Caco-2 (cell line): ENCODE measurements at regions of chr4 and their contacts with region 1.

Region 1: DNA sequence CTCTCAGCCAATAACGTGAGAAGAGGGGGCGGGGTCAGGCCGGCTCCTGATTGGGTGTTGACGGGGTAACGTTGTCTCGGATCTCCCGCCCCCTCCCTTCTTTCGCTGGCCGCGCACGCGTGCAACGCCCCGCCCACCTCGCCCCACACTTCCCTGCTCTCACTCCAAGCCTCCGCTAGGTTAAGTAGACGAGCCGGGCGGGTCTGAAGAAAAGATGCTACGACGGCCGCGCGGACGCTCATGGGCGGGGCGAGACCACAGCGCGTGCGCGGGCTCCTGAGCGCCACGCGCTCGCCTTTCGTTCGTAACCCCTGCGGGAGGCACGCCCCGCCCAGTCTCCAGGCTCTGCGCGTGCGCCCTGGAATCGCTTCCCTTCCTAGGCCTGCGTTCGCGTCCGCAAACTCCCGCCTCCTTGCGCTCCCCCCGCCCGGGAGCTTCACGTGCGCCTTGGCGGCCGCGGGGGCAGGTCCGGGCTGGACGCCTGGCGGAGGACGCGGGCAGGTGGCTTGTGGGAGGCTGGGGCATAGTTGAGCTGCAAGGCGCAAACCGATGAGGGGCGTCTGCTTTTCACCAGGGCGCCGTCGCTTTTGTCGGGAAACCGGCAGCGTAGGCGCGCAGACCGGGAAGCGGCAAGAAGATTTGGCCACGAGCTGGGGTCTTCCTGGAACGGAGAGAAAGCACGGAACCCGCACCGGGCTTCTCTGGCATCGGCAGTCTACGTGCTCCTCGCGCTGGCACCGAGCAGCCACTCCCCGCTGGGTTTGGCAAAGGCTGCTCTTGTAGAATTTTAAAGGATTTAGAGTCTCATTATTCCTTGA is 467 bp upstream of the PGRMC2 start:
- DNase-seq: peak; percentile 99
- H3K4me3 ChIP-seq: peak overlapping the region; percentile 92
- H3K4me3 Mint-ChIP-seq: peak overlapping the region; percentile 91
- H3K27ac Mint-ChIP-seq: peak overlapping the region; percentile 82
- H3K4me1 ChIP-seq: peaks cover 30% of the 10 kb centered on the region
- H3K4me1 Mint-ChIP-seq: peaks cover 29% of the 10 kb centered on the region
- H3K27me3 ChIP-seq: no peaks in the 10 kb centered on the region
- H3K27me3 Mint-ChIP-seq: no peaks in the 10 kb centered on the region
- CTCF ChIP-seq: peak in 1 of 2 experiments; percentile 34

Region 2: GRCh38 chr4:128060699-128061565 is 227.1 kb before region 1 on chr4 and contains the start of gene LARP1B:
- CTCF ChIA-PET with region 1: no interaction called
- POLR2A ChIA-PET with region 1: interaction called, 5 read pairs
- intact Hi-C with region 1: loop called (anchors 2 kb)
- DNase-seq: peak; percentile 97
- H3K4me3 ChIP-seq: peak within 1 kb of the TSS; percentile 86
- H3K4me3 Mint-ChIP-seq: peak within 1 kb of the TSS; percentile 71
- H3K27ac Mint-ChIP-seq: peak within 1 kb of the TSS; percentile 93
- H3K4me1 ChIP-seq: no peaks in the 10 kb centered on the region; the same call in 1 of the 2 replicates
- H3K4me1 Mint-ChIP-seq: peaks cover 5% of the 10 kb centered on the region
- H3K27me3 ChIP-seq: no peaks in the 10 kb centered on the region
- H3K27me3 Mint-ChIP-seq: no peaks in the 10 kb centered on the region
- CTCF ChIP-seq: no peak
- total RNA-seq, gene LARP1B: 23.6 and 25.0 TPM in 2 replicates

Region 3: DNA sequence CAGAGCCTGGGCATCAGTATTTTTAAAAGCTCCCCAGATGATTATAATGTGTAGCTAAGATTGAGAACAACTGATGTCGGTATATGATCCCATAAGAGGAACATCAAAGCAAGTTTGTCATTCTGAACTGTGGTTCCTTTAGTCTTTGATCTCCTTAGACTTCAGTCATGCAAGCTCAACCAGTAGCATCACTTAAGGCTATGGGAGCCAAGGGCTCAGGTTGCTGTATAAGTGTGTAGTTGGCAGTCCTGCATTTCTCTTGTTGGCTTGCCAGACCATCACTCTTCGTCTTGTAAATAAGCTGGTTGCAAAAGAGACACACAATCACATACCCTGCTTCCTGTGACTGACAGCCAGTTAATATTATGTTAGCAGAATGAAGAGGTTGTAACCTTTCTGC is 83.2 kb before region 1 on chr4:
- CTCF ChIA-PET with region 1: no interaction called
- POLR2A ChIA-PET with region 1: no interaction called
- intact Hi-C with region 1: no loop called
- DNase-seq: no peak
- H3K4me3 ChIP-seq: no peak overlapping the region
- H3K4me3 Mint-ChIP-seq: no peak overlapping the region
- H3K27ac Mint-ChIP-seq: no peak overlapping the region
- H3K4me1 ChIP-seq: no peaks in the 10 kb centered on the region
- H3K4me1 Mint-ChIP-seq: no peaks in the 10 kb centered on the region
- H3K27me3 ChIP-seq: no peaks in the 10 kb centered on the region
- H3K27me3 Mint-ChIP-seq: no peaks in the 10 kb centered on the region
- CTCF ChIP-seq: no peak

Region 4: GRCh38 chr4:128307123-128307571 is 19.1 kb after region 1 on chr4:
- CTCF ChIA-PET with region 1: interaction called, 3 read pairs
- POLR2A ChIA-PET with region 1: no interaction called
- intact Hi-C with region 1: loop called (anchors 1 kb)
- DNase-seq: peak in 1 of 2 experiments; percentile 13
- H3K4me3 ChIP-seq: no peak overlapping the region
- H3K4me3 Mint-ChIP-seq: no peak overlapping the region
- H3K27ac Mint-ChIP-seq: peak overlapping the region; percentile 27
- H3K4me1 ChIP-seq: peaks cover 18% of the 10 kb centered on the region; the same call in 1 of the 2 replicates
- H3K4me1 Mint-ChIP-seq: peaks cover 10% of the 10 kb centered on the region
- H3K27me3 ChIP-seq: no peaks in the 10 kb centered on the region
- H3K27me3 Mint-ChIP-seq: no peaks in the 10 kb centered on the region
- CTCF ChIP-seq: no peak

Region 5: DNA sequence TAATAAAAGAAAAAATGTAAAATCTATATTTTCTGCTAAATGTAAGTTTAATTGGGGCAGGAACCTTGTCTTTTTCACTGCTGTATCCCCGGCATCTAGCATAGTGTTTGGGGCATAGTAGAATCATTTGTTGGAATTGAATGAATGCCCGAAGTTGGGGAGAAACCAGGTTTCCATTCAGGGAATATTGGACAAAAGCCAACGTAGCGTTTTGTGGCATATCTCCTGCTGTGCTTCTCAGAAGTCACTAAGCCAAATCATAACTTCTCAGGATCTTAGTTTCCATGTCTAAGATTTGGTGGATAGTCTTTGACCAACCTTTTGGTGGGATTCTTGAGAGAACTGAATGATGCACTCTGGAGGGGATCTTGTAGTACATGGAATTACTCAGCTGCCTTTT is 41.6 kb after region 1 on chr4:
- CTCF ChIA-PET with region 1: no interaction called
- POLR2A ChIA-PET with region 1: no interaction called
- intact Hi-C with region 1: no loop called
- DNase-seq: no peak
- H3K4me3 ChIP-seq: no peak overlapping the region
- H3K4me3 Mint-ChIP-seq: no peak overlapping the region
- H3K27ac Mint-ChIP-seq: no peak overlapping the region
- H3K4me1 ChIP-seq: peaks cover 4% of the 10 kb centered on the region; the same call in 1 of the 2 replicates
- H3K4me1 Mint-ChIP-seq: peaks cover 5% of the 10 kb centered on the region
- H3K27me3 ChIP-seq: no peaks in the 10 kb centered on the region
- H3K27me3 Mint-ChIP-seq: no peaks in the 10 kb centered on the region
- CTCF ChIP-seq: no peak

Region 6: GRCh38 chr4:128385683-128386304 is 97.7 kb after region 1 on chr4:
- CTCF ChIA-PET with region 1: no interaction called
- POLR2A ChIA-PET with region 1: no interaction called
- intact Hi-C with region 1: loop called (anchors 1 kb)
- DNase-seq: no peak
- H3K4me3 ChIP-seq: no peak overlapping the region
- H3K4me3 Mint-ChIP-seq: no peak overlapping the region
- H3K27ac Mint-ChIP-seq: no peak overlapping the region
- H3K4me1 ChIP-seq: peaks cover 32% of the 10 kb centered on the region
- H3K4me1 Mint-ChIP-seq: peaks cover 8% of the 10 kb centered on the region
- H3K27me3 ChIP-seq: no peaks in the 10 kb centered on the region
- H3K27me3 Mint-ChIP-seq: no peaks in the 10 kb centered on the region
- CTCF ChIP-seq: no peak

Region 7: GRCh38 chr4:128653517-128654444 is 365.7 kb after region 1 on chr4:
- CTCF ChIA-PET with region 1: interaction called, 3 read pairs
- POLR2A ChIA-PET with region 1: no interaction called
- intact Hi-C with region 1: loop called (anchors 5 kb)
- DNase-seq: peak; percentile 79 to 93
- H3K4me3 ChIP-seq: no peak overlapping the region
- H3K4me3 Mint-ChIP-seq: peak overlapping the region; percentile 54
- H3K27ac Mint-ChIP-seq: peak overlapping the region; percentile 73
- H3K4me1 ChIP-seq: peaks cover 54% of the 10 kb centered on the region
- H3K4me1 Mint-ChIP-seq: peaks cover 26% of the 10 kb centered on the region
- H3K27me3 ChIP-seq: no peaks in the 10 kb centered on the region
- H3K27me3 Mint-ChIP-seq: no peaks in the 10 kb centered on the region
- CTCF ChIP-seq: no peak